ENCODE measurements at regions of chr1 and their contacts with region 1.

Region 1: GRCh38 chr1:27044613-27045151 is 32.0 kb upstream of the TENT5B start:
- DNase-seq: peak; percentile 70
- H3K4me3 ChIP-seq: no peak overlapping the region
- H3K27ac ChIP-seq: no peak overlapping the region
- H3K4me1 ChIP-seq: peaks cover 4% of the 10 kb centered on the region
- H3K27me3 ChIP-seq: no peaks in the 10 kb centered on the region
- CTCF ChIP-seq: peak; percentile 98 to 99

Region 2: GRCh38 chr1:26999440-26999987 is 45.2 kb before region 1 on chr1:
- CTCF ChIA-PET with region 1: no interaction called
- dilution Hi-C with region 1: no loop called
- in situ Hi-C with region 1: no loop called
- intact Hi-C with region 1: loop called (anchors 1 kb)
- DNase-seq: peak; percentile 94
- H3K4me3 ChIP-seq: no peak overlapping the region
- H3K27ac ChIP-seq: peak overlapping the region; percentile 96
- H3K4me1 ChIP-seq: peaks cover 88% of the 10 kb centered on the region
- H3K27me3 ChIP-seq: no peaks in the 10 kb centered on the region
- CTCF ChIP-seq: peak in 1 of 2 donors; percentile 15

Region 3: DNA sequence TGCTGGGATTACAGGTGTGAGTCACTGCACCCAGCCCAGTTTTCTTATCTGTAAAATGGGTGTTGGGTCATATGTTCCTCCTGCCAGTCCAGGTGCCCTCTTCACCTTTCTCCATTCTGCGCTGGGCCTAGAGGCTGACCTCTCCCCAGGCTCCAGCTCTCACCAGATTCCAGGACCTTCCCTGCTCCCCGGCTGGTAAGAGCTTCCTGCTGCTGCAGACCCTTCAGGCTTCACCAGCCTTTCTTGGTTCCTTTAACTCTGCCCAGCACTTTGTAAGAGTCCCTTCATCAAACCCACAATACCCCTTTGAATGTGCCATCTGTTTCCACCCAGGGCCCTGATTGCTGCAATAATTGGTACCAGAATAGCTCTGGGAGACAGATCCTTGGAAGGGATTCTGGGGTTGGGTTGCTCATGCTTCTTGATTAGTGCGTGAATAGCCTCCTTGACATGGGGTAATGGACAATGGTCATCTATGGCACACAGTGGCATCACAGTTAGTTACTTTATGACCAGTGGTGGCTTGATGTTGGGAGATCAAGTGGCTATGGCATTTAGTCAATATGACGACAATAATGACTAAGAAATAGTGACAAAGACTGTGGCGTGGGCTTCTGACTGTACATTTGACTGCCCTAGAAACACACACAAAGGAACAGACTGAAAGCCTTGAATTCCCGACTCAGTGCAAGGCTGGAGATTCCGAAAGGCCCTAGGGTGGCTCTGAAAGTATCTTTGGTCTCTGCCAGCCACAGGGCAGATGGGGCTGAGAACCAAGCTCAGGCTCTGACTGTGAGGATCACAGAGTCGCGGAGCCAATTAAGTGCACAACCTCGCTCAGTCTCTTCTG is 42.9 kb after region 1 on chr1:
- CTCF ChIA-PET with region 1: no interaction called
- dilution Hi-C with region 1: loop called (anchors 5 kb)
- in situ Hi-C with region 1: loop called in 1 of 2 experiments (anchors 5 kb)
- intact Hi-C with region 1: no loop called
- DNase-seq: no peak
- H3K4me3 ChIP-seq: no peak overlapping the region
- H3K27ac ChIP-seq: no peak overlapping the region
- H3K4me1 ChIP-seq: peaks cover 10% of the 10 kb centered on the region
- H3K27me3 ChIP-seq: peaks cover 1% of the 10 kb centered on the region
- CTCF ChIP-seq: no peak

Region 4: DNA sequence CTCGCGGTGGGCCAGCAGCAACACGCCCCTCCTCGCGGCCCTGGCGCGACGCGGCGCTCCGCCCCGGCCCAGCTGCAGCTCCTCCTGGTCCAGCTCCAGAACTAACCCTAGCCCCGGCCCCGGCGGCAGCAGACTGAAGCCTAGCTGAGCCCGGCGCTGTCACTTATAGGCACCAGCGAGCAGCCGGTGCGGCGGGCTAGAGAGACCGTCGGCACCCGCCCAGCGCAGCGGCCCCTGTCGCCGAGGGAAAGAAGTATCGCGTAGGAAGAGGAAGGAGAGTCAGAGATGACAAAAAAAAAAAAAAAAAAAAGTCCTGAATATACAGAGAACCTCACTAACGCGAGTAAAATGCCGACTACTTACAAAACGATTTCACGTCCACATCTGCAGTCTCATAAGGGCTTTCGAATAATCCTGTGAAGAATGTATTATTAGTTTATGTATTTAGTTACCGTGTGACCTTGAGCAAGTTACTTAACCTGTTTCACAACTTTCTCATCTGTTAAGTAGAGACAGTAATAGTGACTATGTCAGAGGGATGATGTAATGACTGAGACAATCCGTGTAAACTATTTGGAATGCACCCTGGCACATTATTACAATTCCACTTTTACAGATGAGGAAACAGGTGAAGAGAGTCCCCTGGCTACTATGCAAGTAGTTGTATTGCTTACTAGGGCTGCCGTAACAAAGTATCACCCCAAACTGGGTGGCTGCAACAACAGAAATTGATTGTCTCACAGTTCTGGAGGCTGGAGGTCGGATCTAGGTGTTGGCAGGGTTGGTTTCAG is 110.5 kb after region 1 on chr1 and contains the start of gene SLC9A1:
- CTCF ChIA-PET with region 1: no interaction called
- dilution Hi-C with region 1: no loop called
- in situ Hi-C with region 1: no loop called
- intact Hi-C with region 1: loop called (anchors 2 kb)
- DNase-seq: peak; percentile 89
- H3K4me3 ChIP-seq: peak within 1 kb of the TSS; percentile 66 to 76 (median 69)
- H3K27ac ChIP-seq: peak within 1 kb of the TSS; percentile 89
- H3K4me1 ChIP-seq: peaks cover 37% of the 10 kb centered on the region
- H3K27me3 ChIP-seq: no peaks in the 10 kb centered on the region
- CTCF ChIP-seq: peak; percentile 72 to 91
- total RNA-seq, gene SLC9A1: 9.5 to 124 TPM

Region 5: DNA sequence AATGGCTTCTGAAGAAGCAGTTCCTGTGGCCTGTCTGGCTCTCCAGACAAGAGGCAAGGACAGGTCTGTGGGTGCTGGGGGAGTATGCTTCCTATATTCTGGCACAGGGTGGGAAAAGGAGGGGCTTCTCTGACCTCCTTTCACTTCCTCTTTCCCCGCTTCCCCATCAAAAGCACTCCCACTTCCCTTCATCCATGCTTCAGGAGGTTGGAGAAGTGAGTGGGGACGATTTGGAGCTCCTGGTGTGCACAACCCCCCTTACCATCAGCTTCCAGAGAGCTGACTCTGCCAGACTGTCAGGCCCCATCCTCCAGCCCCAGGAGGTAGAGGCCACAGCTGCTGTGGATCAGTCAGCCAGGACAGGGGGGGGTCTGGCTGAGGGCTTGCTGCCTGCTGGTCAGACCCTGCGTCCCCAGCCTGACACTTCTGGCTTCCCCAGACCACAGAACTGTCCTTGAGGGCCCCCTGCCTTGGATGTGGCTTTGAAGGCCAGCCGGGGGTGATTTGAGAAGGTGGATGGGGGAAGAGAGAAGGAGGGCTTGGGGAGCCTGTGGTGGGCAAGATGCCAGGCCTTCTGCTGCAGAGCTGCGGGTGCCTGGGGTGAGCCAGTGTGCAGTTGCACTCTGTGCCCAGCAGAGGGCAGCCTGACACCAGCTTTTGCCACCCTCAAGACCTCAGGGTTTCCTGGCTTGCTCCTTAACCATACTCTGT is 255.8 kb after region 1 on chr1:
- CTCF ChIA-PET with region 1: interaction called, 11 read pairs
- dilution Hi-C with region 1: loop called (anchors 25 kb)
- in situ Hi-C with region 1: no loop called
- intact Hi-C with region 1: loop called (anchors 2 kb)
- DNase-seq: peak; percentile 73
- H3K4me3 ChIP-seq: no peak overlapping the region
- H3K27ac ChIP-seq: peak overlapping the region; percentile 86
- H3K4me1 ChIP-seq: peaks cover 28% of the 10 kb centered on the region
- H3K27me3 ChIP-seq: no peaks in the 10 kb centered on the region
- CTCF ChIP-seq: peak; percentile 96 to 98

Region 6: DNA sequence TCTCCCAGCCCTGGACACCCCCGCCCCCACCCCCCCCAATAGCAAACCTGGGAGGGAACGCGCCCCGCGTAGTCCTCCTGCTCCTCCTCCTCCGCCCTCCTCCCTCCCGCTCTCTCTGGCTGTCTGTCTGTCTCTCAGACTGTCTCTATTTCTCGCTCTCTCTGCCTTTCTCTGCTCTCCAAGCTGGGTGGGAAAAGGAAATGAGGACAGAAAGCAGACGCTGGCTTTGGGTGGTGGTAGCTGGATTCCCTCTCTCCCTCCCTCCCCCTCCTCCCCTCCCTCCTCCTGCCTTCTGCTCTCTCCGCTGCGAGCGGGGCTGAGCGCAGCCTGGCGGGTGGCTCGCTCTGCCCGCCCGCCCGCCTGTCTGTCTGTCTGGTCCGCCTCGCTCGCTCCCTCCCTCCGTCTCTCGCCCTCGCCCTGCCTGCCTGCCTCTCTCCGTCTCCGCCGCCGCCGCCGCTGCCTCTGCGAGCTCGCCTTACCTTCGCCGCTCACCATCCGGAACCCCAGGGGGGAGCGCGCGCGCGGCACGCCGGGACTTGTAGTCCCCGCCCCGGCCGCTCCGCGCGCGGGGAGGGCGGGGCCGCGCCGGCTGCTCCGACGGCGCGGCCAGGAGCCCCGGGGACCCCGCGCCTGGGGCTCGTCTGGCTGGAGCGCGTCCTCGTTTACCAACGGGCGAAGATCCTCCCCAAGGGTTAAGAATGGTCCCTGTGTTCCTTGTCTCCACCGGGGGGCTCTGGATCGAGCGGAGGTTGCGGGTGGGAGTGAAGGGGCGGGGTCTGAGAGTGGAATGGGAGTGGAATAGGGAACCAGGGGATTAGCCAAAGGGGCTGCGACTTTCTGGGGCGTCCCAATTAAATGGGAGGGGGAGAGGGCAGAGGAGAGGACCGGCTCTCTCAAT is 559.2 kb after region 1 on chr1 and contains the start of gene AHDC1:
- CTCF ChIA-PET with region 1: no interaction called
- dilution Hi-C with region 1: no loop called
- in situ Hi-C with region 1: no loop called
- intact Hi-C with region 1: loop called (anchors 5 kb)
- DNase-seq: peak; percentile 89
- H3K4me3 ChIP-seq: peak within 1 kb of the TSS; percentile 77 to 93 (median 78)
- H3K27ac ChIP-seq: peak within 1 kb of the TSS; percentile 33
- H3K4me1 ChIP-seq: peaks cover 44% of the 10 kb centered on the region
- H3K27me3 ChIP-seq: no peaks in the 10 kb centered on the region
- CTCF ChIP-seq: peak in 1 of 2 donors; percentile 14
- total RNA-seq, gene AHDC1: 35.3 to 51.8 TPM